AG04449 (cell line): ENCODE measurements at regions of chr17 and their contacts with region 1.

Region 1: DNA sequence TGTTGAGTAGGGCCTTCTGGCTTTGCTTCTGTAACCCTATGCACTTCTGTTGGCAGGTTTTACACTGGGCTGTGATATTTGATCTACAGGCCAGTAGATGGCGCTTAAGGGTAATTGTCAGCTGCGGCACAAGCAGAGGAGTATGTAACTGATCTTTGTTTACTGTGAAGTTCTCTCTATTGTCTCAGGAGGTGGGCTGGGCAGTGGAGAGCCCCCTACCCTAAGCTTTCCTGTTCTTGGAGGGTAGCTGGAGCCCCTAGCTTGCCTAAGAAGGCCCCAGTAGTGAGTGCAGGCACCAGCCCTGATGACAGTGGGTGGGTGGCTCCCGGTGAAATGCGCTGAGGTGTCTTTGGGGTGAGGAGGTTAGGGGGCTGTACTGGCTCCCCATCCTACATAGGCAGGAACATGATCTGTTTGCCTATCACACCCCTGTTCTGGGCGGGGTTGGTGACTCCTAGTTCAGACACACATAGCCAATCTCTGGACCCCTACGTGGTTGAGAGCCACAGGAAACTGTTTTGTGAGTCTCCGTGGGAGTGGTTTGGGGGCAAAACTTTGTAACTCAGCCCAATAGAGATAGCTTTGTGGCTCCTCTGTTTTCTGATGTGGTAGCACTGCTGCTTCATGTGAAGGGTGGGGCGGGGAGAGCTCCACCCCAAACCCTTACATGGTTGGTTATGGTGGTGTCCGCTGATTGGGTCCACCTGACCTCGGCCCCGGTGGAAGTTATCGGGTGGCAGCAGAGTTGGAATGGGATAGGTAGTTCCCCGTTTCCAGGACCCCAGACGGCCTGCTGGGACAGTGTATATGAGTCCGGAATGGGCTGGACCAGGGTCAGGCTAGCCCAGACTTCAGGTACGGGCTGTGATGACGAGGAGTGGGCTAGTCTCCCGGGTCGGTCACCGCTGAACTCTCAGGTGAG is 60.4 kb downstream of the SLFN11 start:
- DNase-seq: peak; percentile 16
- H3K4me3 ChIP-seq: peak overlapping the region; percentile 12; the same call in 1 of the 2 replicates
- CTCF ChIP-seq: peak; percentile 69

Region 2: GRCh38 chr17:34998205-34998604 is 314.8 kb before region 1 on chr17:
- CTCF ChIA-PET with region 1: no interaction called
- POLR2A ChIA-PET with region 1: no interaction called
- DNase-seq: no peak
- H3K4me3 ChIP-seq: no peak overlapping the region
- CTCF ChIP-seq: peak; percentile 96

Region 3: GRCh38 chr17:35299129-35299528 is 13.9 kb before region 1 on chr17:
- CTCF ChIA-PET with region 1: interaction called, 24 read pairs
- POLR2A ChIA-PET with region 1: no interaction called
- DNase-seq: no peak
- H3K4me3 ChIP-seq: no peak overlapping the region
- CTCF ChIP-seq: no peak